Posterior cingulate gyrus (tissue), 11 donors: ENCODE measurements at regions of chr22 and their contacts with region 1.

Region 1: DNA sequence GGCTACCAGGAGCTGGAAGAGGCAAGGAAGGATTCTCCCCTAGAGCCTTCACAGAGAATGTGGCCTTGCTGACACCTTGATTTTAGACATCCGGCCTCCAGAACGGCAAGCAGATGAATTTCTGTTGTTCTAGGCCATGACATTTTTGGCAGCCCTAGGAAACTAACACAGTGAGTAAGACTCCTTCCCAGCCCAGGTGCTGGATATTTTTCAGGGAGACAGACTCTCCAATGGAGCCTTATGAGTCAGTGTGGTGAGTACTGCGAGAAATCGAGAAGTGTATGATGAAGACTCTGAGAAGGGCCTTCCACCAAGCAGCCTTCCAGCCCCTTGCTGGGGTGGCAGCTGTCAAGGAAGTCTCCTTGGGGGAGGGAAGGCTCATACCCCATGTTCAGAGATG is 114.4 kb downstream of the OSBP2 start:
- DNase-seq: no peak

Region 2: GRCh38 chr22:30843245-30843644 is 34.2 kb after region 1 on chr22:
- intact Hi-C with region 1: loop called (anchors 2 kb)
- DNase-seq: no peak